Calu3 (cell line): ENCODE measurements at regions of chr1 and their contacts with region 1.

Region 1: GRCh38 chr1:115373305-115373704 is 35.3 kb upstream of the NGF start:
- DNase-seq: no peak
- H3K4me3 Mint-ChIP-seq: no peak overlapping the region
- H3K27ac Mint-ChIP-seq: no peak overlapping the region
- H3K4me1 Mint-ChIP-seq: no peaks in the 10 kb centered on the region
- H3K27me3 Mint-ChIP-seq: no peaks in the 10 kb centered on the region
- CTCF ChIP-seq: no peak

Region 2: DNA sequence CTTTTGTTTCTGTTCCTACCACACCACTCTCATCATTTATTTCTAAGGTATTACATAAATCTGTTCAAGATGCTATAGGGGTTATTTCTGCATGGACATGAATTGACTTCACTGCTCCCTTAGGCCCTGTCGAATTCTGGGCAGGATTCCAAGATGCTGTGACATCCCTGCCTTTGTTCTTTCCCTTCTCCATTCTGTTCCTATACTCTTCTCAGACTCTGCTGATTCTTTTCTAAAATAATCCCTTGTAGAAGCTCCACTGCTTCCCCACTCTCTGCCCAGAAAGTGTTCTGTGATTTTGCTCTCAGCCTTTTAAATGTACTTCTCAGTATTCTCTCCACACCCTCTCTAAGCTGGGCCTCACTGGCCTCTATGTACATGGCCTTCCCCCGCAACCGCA is 1713.2 kb before region 1 on chr1:
- CTCF ChIA-PET with region 1: no interaction called
- intact Hi-C with region 1: no loop called
- DNase-seq: no peak
- H3K4me3 Mint-ChIP-seq: no peak overlapping the region
- H3K27ac Mint-ChIP-seq: no peak overlapping the region
- H3K4me1 Mint-ChIP-seq: no peaks in the 10 kb centered on the region
- H3K27me3 Mint-ChIP-seq: no peaks in the 10 kb centered on the region
- CTCF ChIP-seq: no peak

Region 3: DNA sequence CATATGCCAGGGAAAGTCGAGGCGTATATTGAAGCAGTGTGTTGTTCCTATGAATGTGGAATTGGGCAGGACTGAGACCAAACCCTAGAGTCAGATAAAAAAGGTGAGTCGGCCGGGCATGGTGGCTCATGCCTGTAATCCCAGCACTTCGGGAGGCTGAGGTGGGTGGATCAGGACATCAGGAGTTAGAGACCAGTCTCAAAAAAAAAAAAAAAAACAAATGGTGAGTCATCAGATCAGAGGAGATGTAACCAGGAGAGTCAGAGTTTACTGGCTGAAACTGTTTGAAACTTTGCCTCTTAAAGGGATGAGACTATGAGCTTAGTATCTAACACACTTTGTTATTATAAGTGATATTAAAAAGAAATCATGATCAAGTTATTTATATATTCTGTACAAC is 545.1 kb before region 1 on chr1:
- CTCF ChIA-PET with region 1: no interaction called
- intact Hi-C with region 1: no loop called
- DNase-seq: no peak
- H3K4me3 Mint-ChIP-seq: no peak overlapping the region
- H3K27ac Mint-ChIP-seq: no peak overlapping the region
- H3K4me1 Mint-ChIP-seq: no peaks in the 10 kb centered on the region
- H3K27me3 Mint-ChIP-seq: no peaks in the 10 kb centered on the region
- CTCF ChIP-seq: no peak

Region 4: GRCh38 chr1:115323376-115324004 is 49.8 kb before region 1 on chr1:
- CTCF ChIA-PET with region 1: no interaction called
- intact Hi-C with region 1: loop called (anchors 2 kb)
- DNase-seq: no peak
- H3K4me3 Mint-ChIP-seq: no peak overlapping the region
- H3K27ac Mint-ChIP-seq: no peak overlapping the region
- H3K4me1 Mint-ChIP-seq: no peaks in the 10 kb centered on the region
- H3K27me3 Mint-ChIP-seq: peaks cover 68% of the 10 kb centered on the region
- CTCF ChIP-seq: no peak